H1 (cell line): ENCODE measurements at regions of chr5 and their contacts with region 1.

Region 1: GRCh38 chr5:168268949-168269943 is 22.2 kb upstream of the WWC1 start:
- DNase-seq: peak; percentile 86 to 98
- H3K4me3 ChIP-seq: peak overlapping the region; percentile 17 to 57 (median 31); a peak in 5 of 8 replicates
- H3K27ac ChIP-seq: no peak overlapping the region
- H3K4me1 ChIP-seq: peaks cover 0 to 9% (median under 1%) of the 10 kb centered on the region in 4 experiments; a peak in 3 of 7 replicates
- H3K27me3 ChIP-seq: no peaks in the 10 kb centered on the region; a peak in 1 of 7 replicates
- CTCF ChIP-seq: peak; percentile 94 to 97 (median 94)
- EP300 ChIP-seq: 0 out of 3 replicates have a peak, but pooled peaks of 1 of the 2 experiments have one; percentile 45
- POLR2A ChIP-seq: peak in 1 of 2 experiments; percentile 50; a peak in 2 of 3 replicates
- RAD21 ChIP-seq: peak; percentile 99 to 100

Region 2: GRCh38 chr5:168215646-168216045 is 53.6 kb before region 1 on chr5:
- CTCF ChIA-PET with region 1: no interaction called
- POLR2A ChIA-PET with region 1: no interaction called
- DNase-seq: no peak
- H3K4me3 ChIP-seq: no peak overlapping the region
- H3K27ac ChIP-seq: no peak overlapping the region
- H3K4me1 ChIP-seq: peaks cover 5 to 17% (median 13%) of the 10 kb centered on the region in 4 experiments; a peak in 6 of 7 replicates
- H3K27me3 ChIP-seq: no peaks in the 10 kb centered on the region
- CTCF ChIP-seq: no peak
- EP300 ChIP-seq: no peak
- POLR2A ChIP-seq: no peak
- RAD21 ChIP-seq: no peak

Region 3: DNA sequence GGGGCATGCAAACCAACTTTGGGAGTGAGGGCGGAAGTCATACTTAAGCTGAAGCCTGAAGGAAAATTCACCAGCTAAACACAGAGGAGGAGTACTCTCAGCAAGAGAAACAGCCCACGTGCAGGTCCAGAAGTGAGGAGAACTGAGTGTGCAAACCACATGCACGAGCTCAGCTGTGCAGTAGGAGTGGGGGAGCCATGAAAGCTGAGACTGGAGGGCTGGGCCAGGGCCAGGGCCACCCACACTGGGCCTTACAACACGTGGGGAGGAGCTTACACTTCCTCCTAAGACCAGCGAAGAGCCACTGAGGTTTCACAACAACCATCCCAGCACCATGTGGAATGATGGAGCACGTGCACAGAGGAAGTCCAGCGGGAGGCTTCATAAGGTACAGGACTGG is 12.9 kb after region 1 on chr5:
- CTCF ChIA-PET with region 1: interaction called, 33 read pairs
- POLR2A ChIA-PET with region 1: no interaction called
- DNase-seq: no peak
- H3K4me3 ChIP-seq: no peak overlapping the region
- H3K27ac ChIP-seq: no peak overlapping the region
- H3K4me1 ChIP-seq: peaks cover 4 to 9% (median 6%) of the 10 kb centered on the region in 4 experiments; a peak in 6 of 7 replicates
- H3K27me3 ChIP-seq: no peaks in the 10 kb centered on the region; a peak in 1 of 7 replicates
- CTCF ChIP-seq: no peak
- EP300 ChIP-seq: no peak
- POLR2A ChIP-seq: no peak
- RAD21 ChIP-seq: no peak

Region 4: DNA sequence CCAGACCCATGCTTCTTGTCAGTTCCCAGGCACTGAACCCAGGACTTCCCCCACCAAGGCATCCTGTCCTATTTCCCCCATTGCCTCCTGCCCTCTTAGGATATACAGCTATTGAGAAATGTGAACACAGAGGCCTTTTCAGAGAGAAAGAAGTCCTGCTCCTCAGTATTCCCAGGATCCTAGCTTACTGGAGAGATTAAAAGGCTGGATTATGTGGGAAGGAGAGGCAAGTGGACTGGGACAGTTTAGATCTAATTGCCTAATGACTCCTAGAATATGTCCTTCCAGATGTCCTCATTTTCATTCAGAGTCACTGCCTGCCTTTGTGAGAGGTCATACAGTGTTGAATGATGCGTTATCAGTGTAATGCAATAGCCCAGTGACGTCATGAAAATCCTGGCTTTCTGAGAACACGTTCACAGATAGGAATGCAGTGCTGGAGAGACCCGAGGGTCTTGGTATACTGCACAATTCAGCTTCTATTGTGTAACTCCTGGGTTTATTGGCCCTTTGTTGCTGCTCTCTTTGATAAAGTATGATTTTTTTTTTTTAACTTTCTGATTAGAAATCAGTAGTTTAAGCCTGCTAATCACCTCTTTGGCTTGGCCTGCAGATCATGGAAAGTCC is 48.4 kb after region 1 on chr5:
- CTCF ChIA-PET with region 1: interaction called, 10 read pairs
- POLR2A ChIA-PET with region 1: no interaction called
- DNase-seq: no peak
- H3K4me3 ChIP-seq: no peak overlapping the region
- H3K27ac ChIP-seq: no peak overlapping the region
- H3K4me1 ChIP-seq: peaks cover 2 to 19% (median 4%) of the 10 kb centered on the region in 4 experiments; a peak in 5 of 7 replicates
- H3K27me3 ChIP-seq: no peaks in the 10 kb centered on the region
- CTCF ChIP-seq: no peak
- EP300 ChIP-seq: no peak
- POLR2A ChIP-seq: no peak
- RAD21 ChIP-seq: no peak

Region 5: GRCh38 chr5:168422431-168422830 is 153.2 kb after region 1 on chr5:
- CTCF ChIA-PET with region 1: interaction called, 38 read pairs
- POLR2A ChIA-PET with region 1: no interaction called
- DNase-seq: no peak
- H3K4me3 ChIP-seq: no peak overlapping the region
- H3K27ac ChIP-seq: no peak overlapping the region
- H3K4me1 ChIP-seq: no peaks in the 10 kb centered on the region
- H3K27me3 ChIP-seq: no peaks in the 10 kb centered on the region
- CTCF ChIP-seq: peak in 2 of 3 experiments; percentile 39; a peak in 2 of 4 replicates
- EP300 ChIP-seq: no peak
- POLR2A ChIP-seq: no peak
- RAD21 ChIP-seq: peak; percentile 52 to 58

Region 6: DNA sequence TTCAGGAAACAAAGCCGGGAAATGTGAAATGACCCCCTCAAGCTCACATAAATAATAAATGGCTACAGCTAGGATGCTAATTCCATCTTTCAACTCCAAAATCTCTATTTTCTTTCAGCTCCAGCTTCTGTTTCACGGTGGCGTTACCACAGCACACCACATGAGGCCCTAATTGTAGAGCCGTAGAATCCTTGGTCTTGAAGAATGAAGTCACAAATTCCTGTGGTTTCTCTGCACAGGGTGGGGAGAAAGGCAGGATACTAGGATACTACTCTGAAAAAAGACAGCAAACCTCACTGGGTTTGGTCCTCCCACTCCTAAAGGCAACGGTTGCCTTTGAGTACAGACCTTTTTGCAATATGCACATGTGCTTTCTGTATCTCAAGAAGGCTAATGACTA is 203.1 kb after region 1 on chr5:
- CTCF ChIA-PET with region 1: interaction called, 11 read pairs
- POLR2A ChIA-PET with region 1: no interaction called
- DNase-seq: no peak
- H3K4me3 ChIP-seq: no peak overlapping the region
- H3K27ac ChIP-seq: no peak overlapping the region
- H3K4me1 ChIP-seq: no peaks in the 10 kb centered on the region
- H3K27me3 ChIP-seq: no peaks in the 10 kb centered on the region
- CTCF ChIP-seq: no peak
- EP300 ChIP-seq: no peak
- POLR2A ChIP-seq: no peak
- RAD21 ChIP-seq: no peak

Region 7: GRCh38 chr5:168486136-168486879 is 217.1 kb after region 1 on chr5 and contains the start of gene RARS1:
- CTCF ChIA-PET with region 1: interaction called, 14 read pairs
- POLR2A ChIA-PET with region 1: interaction called, 5 read pairs
- DNase-seq: peak; percentile 89 to 95
- H3K4me3 ChIP-seq: peak within 1 kb of the TSS; percentile 81 to 100 (median 95)
- H3K27ac ChIP-seq: no peak within 1 kb of the TSS
- H3K4me1 ChIP-seq: peaks cover 0 to 4% (median 2%) of the 10 kb centered on the region in 4 experiments; a peak in 3 of 7 replicates
- H3K27me3 ChIP-seq: no peaks in the 10 kb centered on the region
- CTCF ChIP-seq: peak; percentile 84 to 98 (median 94)
- EP300 ChIP-seq: peak in 1 of 2 experiments; percentile 32; a peak in 1 of 3 replicates
- POLR2A ChIP-seq: peak in 1 of 2 experiments; percentile 90; a peak in 2 of 3 replicates
- RAD21 ChIP-seq: peak; percentile 56 to 68
- total RNA-seq, gene RARS1: 98.9 and 108 TPM in 2 replicates

Region 8: DNA sequence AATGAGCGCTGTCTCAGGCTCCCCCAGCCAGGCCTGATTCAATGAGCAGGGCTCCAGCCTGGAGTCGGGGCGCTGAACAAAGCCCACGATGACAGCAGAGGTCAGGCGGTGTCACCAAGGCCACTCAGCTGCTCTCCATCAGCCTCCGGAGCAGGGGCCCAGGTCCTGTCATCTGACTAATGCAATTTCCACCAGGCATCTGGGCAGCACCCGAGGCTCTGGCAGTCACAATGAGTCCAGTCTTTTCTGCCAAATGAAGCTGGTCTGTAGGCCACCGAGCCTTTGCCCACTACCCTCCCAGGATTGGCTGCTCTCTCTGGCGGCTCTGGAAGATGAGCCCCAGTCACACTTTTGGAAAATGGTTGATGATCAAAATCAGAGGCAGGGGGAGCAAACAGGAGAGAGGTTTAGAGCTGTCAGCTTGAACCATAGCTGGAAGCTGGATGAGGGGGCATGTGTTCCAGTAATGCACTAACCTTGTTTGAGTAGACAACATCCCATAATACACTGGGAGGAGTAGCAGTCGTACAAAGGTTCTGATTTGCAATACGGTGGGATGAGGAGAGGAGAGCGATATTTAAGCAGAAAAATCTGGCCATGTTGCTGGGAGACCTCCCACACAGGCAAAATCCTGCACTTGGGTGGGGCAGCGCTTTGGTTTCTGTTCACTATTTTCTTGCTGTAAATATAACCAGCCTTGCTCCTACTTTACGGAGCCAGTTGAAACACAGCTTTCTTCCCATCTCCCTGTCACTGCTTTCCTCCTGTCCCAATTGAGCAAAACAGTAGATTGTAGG is 616.3 kb after region 1 on chr5:
- CTCF ChIA-PET with region 1: no interaction called
- POLR2A ChIA-PET with region 1: no interaction called
- DNase-seq: no peak
- H3K4me3 ChIP-seq: no peak overlapping the region
- H3K27ac ChIP-seq: no peak overlapping the region
- H3K4me1 ChIP-seq: peaks cover 0 to 10% (median 5%) of the 10 kb centered on the region in 4 experiments; a peak in 4 of 7 replicates
- H3K27me3 ChIP-seq: peaks cover 0 to 3% (median 0%) of the 10 kb centered on the region in 4 experiments; a peak in 1 of 7 replicates
- CTCF ChIP-seq: no peak
- EP300 ChIP-seq: no peak
- POLR2A ChIP-seq: no peak
- RAD21 ChIP-seq: no peak